Dorsolateral prefrontal cortex (tissue), 120 donors: ENCODE measurements at regions of chr6 and their contacts with region 1.

Region 1: DNA sequence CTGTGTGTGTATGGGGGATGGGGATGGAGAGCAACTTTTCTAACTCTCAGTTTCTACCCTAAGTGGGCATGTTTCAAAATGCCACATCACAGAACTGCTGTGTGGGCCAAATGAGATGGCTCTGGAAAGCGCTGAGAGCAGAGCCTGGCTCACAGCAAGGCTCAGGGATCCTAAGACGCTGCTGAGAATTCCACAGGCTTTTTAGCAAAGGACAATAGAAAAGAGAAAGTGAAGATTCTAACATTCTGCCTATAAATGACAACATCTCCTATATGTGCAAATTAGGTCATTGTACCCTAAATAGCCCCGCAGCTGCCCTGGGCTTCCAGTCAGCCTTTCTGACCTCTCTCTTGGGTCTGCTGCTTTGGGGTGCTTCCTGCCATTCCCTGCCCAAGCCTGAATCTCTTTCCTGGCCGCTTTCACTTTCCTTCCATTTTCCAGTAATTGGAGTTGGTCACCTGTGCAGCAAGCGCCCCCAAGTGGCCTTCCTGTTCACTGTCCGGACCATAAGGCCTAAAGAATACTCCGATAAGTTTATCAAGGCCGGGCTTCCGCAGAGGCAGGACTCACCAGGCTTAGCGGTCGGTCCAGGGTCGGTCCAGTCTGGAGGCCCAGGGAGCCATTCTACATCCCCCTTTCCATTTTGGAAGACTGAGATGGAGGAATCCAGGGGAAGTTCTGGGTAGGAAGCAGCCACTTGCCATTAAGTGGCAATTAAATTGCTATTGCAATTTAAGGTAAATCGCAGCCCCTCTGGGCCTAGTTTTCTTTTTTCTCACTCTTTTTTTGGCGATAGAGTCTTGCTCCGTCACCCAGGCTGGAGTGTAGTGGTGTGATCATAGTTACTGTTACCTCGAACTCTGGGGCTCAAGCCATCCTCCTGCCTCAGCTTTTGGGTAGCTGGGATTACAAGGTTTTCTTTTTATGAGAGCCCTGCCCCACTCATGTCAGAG is 6.6 kb upstream of the DDR1 start:
- DNase-seq: peak; percentile 80 to 95 (median 89)
- H3K4me3 ChIP-seq: peak overlapping the region; percentile 15 to 67 (median 50)
- H3K27ac ChIP-seq: peak overlapping the region in 58 of 59 donors; percentile 3 to 95 (median 80)
- H3K27me3 ChIP-seq: no peaks in the 10 kb centered on the region
- CTCF ChIP-seq: peak; percentile 73 to 98 (median 93)

Region 2: GRCh38 chr6:30678964-30679726 is 198.6 kb before region 1 on chr6:
- intact Hi-C with region 1: loop called in 1 of 2 experiments (anchors 5 kb)
- DNase-seq: peak; percentile 78 to 92 (median 84)
- H3K4me3 ChIP-seq: peak overlapping the region in 49 of 59 donors; percentile 8 to 81 (median 35)
- H3K27ac ChIP-seq: peak overlapping the region in 23 of 59 donors; percentile 1 to 87 (median 38)
- H3K27me3 ChIP-seq: no peaks in the 10 kb centered on the region
- CTCF ChIP-seq: peak; percentile 88 to 99 (median 96)

Region 3: DNA sequence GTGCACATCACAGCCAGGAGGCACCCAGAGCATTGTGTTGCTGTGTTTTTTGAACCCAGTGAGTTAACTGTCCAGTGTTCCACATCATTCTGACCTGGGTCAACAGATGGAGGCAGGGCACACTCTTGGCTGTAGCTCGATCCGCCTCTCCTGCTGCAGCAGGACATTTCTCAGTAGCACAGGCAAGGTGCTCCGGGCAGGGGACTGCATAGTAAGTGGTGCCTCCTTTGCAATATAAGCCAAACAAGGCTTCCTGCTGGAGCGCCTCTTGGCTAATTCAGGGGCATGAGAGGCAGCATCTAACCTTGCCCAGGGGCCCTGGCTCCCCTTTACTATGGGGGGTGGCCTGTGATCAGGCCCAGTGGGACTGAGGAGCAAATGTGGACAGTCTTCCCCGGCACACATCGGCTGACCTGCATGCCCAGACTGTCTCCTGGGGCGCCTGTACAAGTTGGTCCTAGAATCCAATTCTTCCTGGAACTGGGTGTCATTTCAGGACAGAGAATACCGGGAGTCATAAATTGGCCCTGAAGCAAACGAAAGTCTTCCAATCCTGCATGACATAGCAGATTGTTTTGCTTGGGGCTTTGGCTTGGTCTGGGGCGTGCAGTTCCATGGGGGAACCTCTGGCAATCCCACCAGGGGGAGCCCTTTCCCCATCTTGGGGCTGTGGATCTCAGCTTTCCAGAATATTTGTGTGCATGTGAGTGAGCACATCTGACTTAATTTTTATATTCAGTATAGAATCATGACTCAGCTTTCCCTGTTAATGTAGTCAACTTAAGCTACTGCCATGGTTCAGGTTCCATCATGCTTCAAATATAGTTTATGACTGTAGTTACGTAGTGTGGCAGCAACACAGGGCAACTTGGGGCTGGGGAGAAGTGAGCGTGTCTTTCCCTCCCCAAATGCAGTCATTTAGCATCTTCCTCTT is 49.4 kb before region 1 on chr6:
- intact Hi-C with region 1: loop called (anchors 1 kb)
- DNase-seq: peak; percentile 80 to 91 (median 87)
- H3K4me3 ChIP-seq: peak overlapping the region in 18 of 59 donors; percentile 4 to 50 (median 19)
- H3K27ac ChIP-seq: peak overlapping the region in 50 of 59 donors; percentile 3 to 86 (median 64)
- H3K27me3 ChIP-seq: no peaks in the 10 kb centered on the region
- CTCF ChIP-seq: peak; percentile 75 to 99 (median 96)

Region 4: GRCh38 chr6:30926644-30927043 is 48.9 kb after region 1 on chr6:
- intact Hi-C with region 1: no loop called
- DNase-seq: peak in 1 of 10 donors; percentile 48
- H3K4me3 ChIP-seq: no peak overlapping the region
- H3K27ac ChIP-seq: no peak overlapping the region
- H3K27me3 ChIP-seq: no peaks in the 10 kb centered on the region
- CTCF ChIP-seq: no peak

Region 5: GRCh38 chr6:31087494-31088089 is 209.9 kb after region 1 on chr6:
- intact Hi-C with region 1: loop called in 1 of 2 experiments (anchors 5 kb)
- DNase-seq: peak; percentile 76 to 91 (median 84)
- H3K4me3 ChIP-seq: no peak overlapping the region
- H3K27ac ChIP-seq: no peak overlapping the region
- H3K27me3 ChIP-seq: no peaks in the 10 kb centered on the region
- CTCF ChIP-seq: peak; percentile 54 to 96 (median 83)